Activated CD8-positive, alpha-beta T cell treated with anti-CD3 and anti-CD28 coated beads for 36 hours (primary cell): ENCODE measurements at regions of chr2 and their contacts with region 1.

Region 1: GRCh38 chr2:27170581-27171333 is 22.0 kb downstream of the TCF23 start:
- DNase-seq: no peak
- ATAC-seq: no peak
- H3K4me3 Mint-ChIP-seq: no peak overlapping the region
- H3K27ac Mint-ChIP-seq: no peak overlapping the region
- H3K4me1 Mint-ChIP-seq: peaks cover 6% of the 10 kb centered on the region
- H3K27me3 Mint-ChIP-seq: peaks cover 9% of the 10 kb centered on the region
- CTCF ChIP-seq: no peak

Region 2: DNA sequence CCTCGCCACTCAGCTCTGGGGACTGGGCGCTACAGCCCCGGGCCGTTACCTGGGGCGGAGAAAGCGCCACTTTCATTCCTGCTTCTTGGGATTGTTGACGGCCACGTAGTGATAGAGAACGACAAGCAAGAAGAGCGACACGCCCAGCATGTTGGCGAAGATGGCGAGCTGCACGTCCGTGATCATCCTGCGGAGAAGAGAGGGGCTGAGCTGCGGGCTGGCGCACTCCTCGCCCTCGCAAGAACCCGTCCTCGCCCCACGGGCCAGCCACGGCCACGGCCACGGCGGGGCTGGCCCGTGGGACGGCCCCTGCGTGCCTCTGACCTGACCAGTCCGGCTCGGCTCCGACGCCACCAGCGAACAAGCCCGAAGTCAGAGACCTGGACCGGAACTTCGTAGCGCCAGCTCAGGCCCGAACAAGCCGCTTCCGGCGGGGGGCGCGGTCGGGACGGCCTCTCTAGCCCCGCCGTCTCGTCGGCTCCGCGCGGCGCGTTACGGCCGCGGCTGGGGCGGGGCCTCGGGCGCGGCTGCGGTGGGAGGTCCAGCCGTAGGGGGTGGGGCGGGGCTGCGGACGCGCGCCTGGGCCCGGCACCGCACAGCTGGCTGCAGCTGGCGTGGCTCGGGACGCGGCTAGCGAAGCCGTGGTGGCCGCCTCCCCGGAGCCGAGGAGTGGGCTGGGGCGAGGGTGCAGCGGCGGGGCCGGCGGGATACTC is 99.3 kb before region 1 on chr2 and contains the start of gene OST4:
- CTCF ChIA-PET with region 1: no interaction called
- POLR2A ChIA-PET with region 1: no interaction called
- intact Hi-C with region 1: no loop called
- DNase-seq: peak; percentile 91
- ATAC-seq: peak; percentile 92
- H3K4me3 Mint-ChIP-seq: peak within 1 kb of the TSS; percentile 98
- H3K27ac Mint-ChIP-seq: peak within 1 kb of the TSS; percentile 95
- H3K4me1 Mint-ChIP-seq: peaks cover 68% of the 10 kb centered on the region
- H3K27me3 Mint-ChIP-seq: no peaks in the 10 kb centered on the region
- CTCF ChIP-seq: no peak
- total RNA-seq, gene OST4: 257 to 262 TPM

Region 3: GRCh38 chr2:27117995-27118524 is 52.7 kb before region 1 on chr2:
- CTCF ChIA-PET with region 1: no interaction called
- POLR2A ChIA-PET with region 1: no interaction called
- intact Hi-C with region 1: no loop called
- DNase-seq: no peak
- ATAC-seq: no peak
- H3K4me3 Mint-ChIP-seq: peak overlapping the region; percentile 61
- H3K27ac Mint-ChIP-seq: peak overlapping the region; percentile 22
- H3K4me1 Mint-ChIP-seq: peaks cover 10% of the 10 kb centered on the region
- H3K27me3 Mint-ChIP-seq: peaks cover 23% of the 10 kb centered on the region
- CTCF ChIP-seq: no peak

Region 4: GRCh38 chr2:27159271-27159670 is 11.5 kb before region 1 on chr2:
- CTCF ChIA-PET with region 1: interaction called, 17 read pairs
- POLR2A ChIA-PET with region 1: no interaction called
- intact Hi-C with region 1: no loop called
- DNase-seq: no peak
- ATAC-seq: no peak
- H3K4me3 Mint-ChIP-seq: no peak overlapping the region
- H3K27ac Mint-ChIP-seq: no peak overlapping the region
- H3K4me1 Mint-ChIP-seq: no peaks in the 10 kb centered on the region
- H3K27me3 Mint-ChIP-seq: no peaks in the 10 kb centered on the region
- CTCF ChIP-seq: no peak